ENCODE measurements at regions of chr10 and their contacts with region 1.

Region 1: GRCh38 chr10:14478604-14479003 is 147.9 kb upstream of the FRMD4A start:
- DNase-seq: peak; percentile 79
- ATAC-seq: peak; percentile 80

Region 2: GRCh38 chr10:13560597-13560996 is 918.0 kb before region 1 on chr10:
- intact Hi-C with region 1: no loop called
- DNase-seq: no peak
- ATAC-seq: no peak

Region 3: GRCh38 chr10:14195433-14195832 is 283.2 kb before region 1 on chr10:
- intact Hi-C with region 1: loop called (anchors 5 kb)
- DNase-seq: no peak
- ATAC-seq: no peak

Region 4: DNA sequence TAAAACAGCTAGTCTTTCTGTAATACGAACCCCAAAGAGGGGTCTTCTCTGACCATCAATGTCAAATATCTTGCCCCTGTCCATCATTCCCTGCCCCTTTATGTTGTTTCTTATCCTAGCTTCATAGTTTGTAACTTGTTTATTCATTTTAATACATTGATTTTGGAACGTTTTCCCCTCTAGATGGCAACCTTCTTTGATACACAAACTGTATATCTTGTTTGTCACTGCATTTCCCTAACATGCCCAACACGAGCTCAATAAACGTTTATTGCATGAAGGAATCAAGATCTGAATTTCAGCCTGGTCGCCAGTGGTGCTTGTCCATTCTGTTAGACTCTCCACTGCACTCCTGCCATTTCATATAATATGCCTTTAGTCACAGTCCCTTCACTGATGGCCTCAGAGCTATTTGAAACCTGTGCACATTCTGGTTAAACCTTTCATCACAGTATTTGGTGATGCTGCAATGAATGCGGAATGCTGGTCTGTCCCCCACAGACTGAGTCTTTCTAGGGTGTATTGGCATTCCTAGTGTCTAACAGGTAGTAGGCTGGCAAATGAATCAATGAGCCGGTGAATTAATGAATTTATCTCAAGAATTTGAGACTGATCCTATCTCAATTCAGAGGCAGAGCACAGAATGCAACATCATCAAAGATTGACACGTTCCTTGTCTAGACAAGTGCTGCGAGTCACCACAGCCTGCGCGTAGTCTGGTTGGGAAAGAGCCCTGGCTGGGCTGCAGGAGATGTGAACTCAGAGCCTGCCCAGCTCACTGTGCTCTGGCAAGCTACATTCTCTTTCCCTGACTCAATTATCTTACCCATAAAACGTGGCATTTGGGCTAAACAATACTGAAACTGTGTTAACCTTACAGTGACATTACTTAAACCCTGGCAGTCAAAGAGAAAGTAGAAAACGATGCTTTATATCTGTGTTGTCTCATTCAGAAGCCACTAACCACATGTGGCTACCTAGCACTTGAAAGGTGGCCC is 92.7 kb before region 1 on chr10:
- intact Hi-C with region 1: loop called (anchors 5 kb)
- DNase-seq: no peak
- ATAC-seq: no peak

Region 5: GRCh38 chr10:14954001-14954770 is 475.6 kb after region 1 on chr10 and contains the start of gene DCLRE1C:
- intact Hi-C with region 1: no loop called
- DNase-seq: peak; percentile 95
- ATAC-seq: peak; percentile 99
- total RNA-seq, gene DCLRE1C: 2.2 TPM